ENCODE measurements at regions of chr15 and their contacts with region 1.

Region 1: DNA sequence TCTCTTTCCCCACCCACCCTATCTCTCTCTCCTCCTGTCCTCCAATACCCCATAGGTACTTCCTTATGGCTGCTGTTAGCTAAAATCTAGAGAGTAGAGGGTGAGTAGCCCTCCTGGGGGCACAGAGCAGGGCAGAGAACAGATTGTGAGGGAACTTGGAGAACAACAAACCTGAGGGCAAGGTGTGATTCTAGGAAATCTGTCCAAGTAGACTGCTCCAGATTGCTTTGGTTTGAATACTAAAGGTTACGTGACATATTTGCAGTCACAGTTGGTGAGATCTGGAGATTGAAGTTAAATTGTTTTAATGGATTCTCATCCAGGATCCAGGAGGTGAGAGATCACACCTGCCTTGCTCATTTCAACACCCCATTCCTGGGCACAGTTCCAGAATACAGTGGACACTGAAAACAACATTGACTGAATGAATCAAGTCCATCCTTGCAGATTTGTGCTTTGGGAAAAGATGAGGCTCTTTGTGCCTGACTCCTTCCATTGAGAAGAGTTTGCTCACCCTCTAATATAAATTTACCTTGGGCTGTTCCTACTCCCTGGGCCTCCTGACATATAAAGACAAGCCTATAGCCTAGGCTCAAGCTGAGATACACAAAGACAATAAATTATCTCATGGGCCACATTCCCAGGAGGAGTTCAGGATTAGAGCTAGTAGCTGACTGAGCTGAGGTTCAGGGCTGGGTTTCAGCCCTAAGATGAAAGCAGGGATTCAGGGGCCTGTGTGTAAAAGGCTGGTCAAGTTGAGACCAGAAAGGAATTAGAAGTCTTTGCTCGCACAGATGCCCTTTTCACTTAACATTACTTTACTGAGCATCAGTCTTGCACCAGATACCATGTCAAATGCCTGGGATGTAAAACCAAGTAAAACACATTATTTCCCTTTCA is 400.9 kb upstream of the MCTP2 start:
- DNase-seq: peak; percentile 53
- H3K4me3 ChIP-seq: no peak overlapping the region
- H3K27ac ChIP-seq: peak overlapping the region; percentile 69
- H3K4me1 ChIP-seq: peaks cover 41% of the 10 kb centered on the region
- H3K27me3 ChIP-seq: no peaks in the 10 kb centered on the region
- CTCF ChIP-seq: no peak

Region 2: GRCh38 chr15:93495799-93496637 is 334.4 kb before region 1 on chr15:
- CTCF ChIA-PET with region 1: no interaction called
- dilution Hi-C with region 1: no loop called
- in situ Hi-C with region 1: no loop called
- intact Hi-C with region 1: no loop called
- DNase-seq: peak; percentile 12
- H3K4me3 ChIP-seq: no peak overlapping the region
- H3K27ac ChIP-seq: no peak overlapping the region
- H3K4me1 ChIP-seq: peaks cover 9% of the 10 kb centered on the region
- H3K27me3 ChIP-seq: no peaks in the 10 kb centered on the region
- CTCF ChIP-seq: no peak

Region 3: DNA sequence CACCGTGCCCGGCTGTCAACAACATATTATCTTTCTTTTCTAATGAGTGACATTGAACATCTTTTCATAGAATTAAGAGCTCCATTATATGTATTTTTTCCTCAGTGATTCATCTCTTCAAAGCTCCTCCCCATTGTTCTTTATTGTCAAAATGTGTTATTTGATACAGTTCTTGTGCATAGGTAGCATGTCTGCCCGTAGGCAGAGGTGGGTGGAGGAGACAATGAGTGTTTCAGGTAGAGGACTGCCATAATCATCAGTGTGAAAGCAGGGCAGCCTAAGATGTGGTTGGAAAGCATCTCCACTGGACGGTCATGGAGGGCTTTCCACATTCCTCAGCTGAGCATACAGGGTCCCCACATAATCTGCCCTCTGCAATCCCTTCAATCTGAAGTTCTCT is 51.1 kb before region 1 on chr15:
- CTCF ChIA-PET with region 1: no interaction called
- dilution Hi-C with region 1: loop called (anchors 5 kb)
- in situ Hi-C with region 1: no loop called
- intact Hi-C with region 1: no loop called
- DNase-seq: no peak
- H3K4me3 ChIP-seq: no peak overlapping the region
- H3K27ac ChIP-seq: no peak overlapping the region
- H3K4me1 ChIP-seq: no peaks in the 10 kb centered on the region
- H3K27me3 ChIP-seq: no peaks in the 10 kb centered on the region
- CTCF ChIP-seq: no peak

Region 4: DNA sequence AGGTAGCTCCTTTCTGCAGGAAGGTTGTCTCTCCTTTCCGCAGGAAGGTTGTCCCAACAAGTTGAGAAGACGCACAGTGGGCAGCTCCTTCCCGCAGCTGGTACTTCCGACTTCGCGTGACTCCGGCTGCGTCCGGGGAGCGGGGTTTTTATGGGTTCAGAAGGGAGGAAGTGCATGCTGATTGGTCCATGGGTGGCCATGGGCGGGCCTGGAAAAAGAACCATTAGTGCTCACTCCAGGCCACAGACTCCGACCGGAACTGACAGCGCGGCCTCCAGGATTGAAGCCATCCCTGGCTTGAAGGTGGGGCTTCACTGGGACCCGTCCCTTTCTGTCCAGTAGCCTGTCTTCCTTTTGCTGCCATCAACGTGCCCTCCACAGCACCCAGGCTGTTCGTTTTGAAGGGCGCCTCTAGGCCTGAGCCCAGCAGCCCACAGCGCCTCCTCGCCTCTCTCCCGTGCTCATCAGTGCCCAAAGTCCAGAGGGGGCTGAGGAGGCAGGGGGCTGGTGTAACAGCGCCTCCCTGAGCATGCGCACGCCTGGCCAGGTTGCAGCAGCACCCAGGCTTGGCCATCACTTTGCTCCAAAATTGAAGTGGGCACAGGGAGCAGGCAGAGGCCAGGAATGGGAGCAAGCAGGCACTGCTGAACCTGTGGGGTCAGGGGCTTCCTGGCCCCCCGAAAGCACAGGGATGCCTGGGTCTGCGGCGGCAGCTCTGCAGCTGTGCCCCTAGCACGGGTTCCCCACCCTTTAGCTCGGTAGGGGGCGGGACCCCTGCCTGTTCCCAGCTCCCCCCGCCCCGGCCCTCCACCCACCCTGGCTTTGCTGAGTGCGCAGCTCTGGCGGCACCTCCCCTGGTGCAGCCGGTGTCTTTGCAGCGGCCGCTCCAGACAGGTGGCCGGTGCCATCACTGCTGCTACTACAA is 70.3 kb after region 1 on chr15:
- CTCF ChIA-PET with region 1: no interaction called
- dilution Hi-C with region 1: no loop called
- in situ Hi-C with region 1: no loop called
- intact Hi-C with region 1: no loop called
- DNase-seq: no peak
- H3K4me3 ChIP-seq: no peak overlapping the region
- H3K27ac ChIP-seq: no peak overlapping the region
- H3K4me1 ChIP-seq: no peaks in the 10 kb centered on the region
- H3K27me3 ChIP-seq: no peaks in the 10 kb centered on the region
- CTCF ChIP-seq: no peak

Region 5: GRCh38 chr15:94174399-94174802 is 344.0 kb after region 1 on chr15:
- CTCF ChIA-PET with region 1: no interaction called
- dilution Hi-C with region 1: no loop called
- in situ Hi-C with region 1: no loop called
- intact Hi-C with region 1: loop called (anchors 2 kb)
- DNase-seq: peak; percentile 93
- H3K4me3 ChIP-seq: no peak overlapping the region
- H3K27ac ChIP-seq: no peak overlapping the region
- H3K4me1 ChIP-seq: peaks cover 15% of the 10 kb centered on the region
- H3K27me3 ChIP-seq: no peaks in the 10 kb centered on the region
- CTCF ChIP-seq: no peak